A673 (cell line): ENCODE measurements at regions of chr12 and their contacts with region 1.

Region 1: GRCh38 chr12:42023733-42024494 is 120.8 kb downstream of the GXYLT1 start:
- DNase-seq: peak; percentile 91
- H3K4me3 ChIP-seq: peak overlapping the region; percentile 34
- H3K27ac ChIP-seq: peak overlapping the region; percentile 54
- H3K4me1 ChIP-seq: peaks cover 14% of the 10 kb centered on the region
- H3K27me3 ChIP-seq: no peaks in the 10 kb centered on the region
- CTCF ChIP-seq: peak; percentile 97

Region 2: DNA sequence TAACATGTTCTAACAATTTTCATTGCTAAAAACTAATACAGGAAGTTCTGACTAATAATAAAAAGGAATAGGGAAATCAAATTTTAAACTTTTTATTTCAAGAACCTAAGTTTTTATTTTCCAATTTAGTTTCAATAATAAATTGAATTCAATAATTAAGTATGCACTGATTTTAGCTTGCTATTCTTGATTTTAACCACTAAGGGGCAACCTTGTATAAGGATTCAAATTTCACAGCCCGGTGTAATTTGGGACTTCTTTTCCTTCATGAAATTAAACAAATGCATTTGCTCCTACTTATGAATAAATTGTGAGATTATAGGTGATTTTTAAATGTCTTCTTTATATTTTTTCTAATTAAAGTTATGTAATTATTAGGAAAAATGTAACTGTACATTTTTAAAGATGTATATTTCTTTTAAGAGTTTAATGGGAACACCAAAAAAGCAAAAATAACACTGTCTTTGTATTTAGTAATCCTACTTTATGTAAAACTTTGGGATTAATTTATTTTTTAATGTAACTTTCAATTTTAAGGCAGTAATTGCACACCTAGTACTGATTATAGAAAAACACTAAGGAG is 1077.2 kb before region 1 on chr12:
- CTCF ChIA-PET with region 1: no interaction called
- POLR2A ChIA-PET with region 1: no interaction called
- intact Hi-C with region 1: loop called (anchors 10 kb)
- DNase-seq: peak; percentile 61
- H3K4me3 ChIP-seq: no peak overlapping the region
- H3K27ac ChIP-seq: no peak overlapping the region
- H3K4me1 ChIP-seq: no peaks in the 10 kb centered on the region
- H3K27me3 ChIP-seq: no peaks in the 10 kb centered on the region
- CTCF ChIP-seq: peak; percentile 75

Region 3: GRCh38 chr12:41684997-41685396 is 338.9 kb before region 1 on chr12:
- CTCF ChIA-PET with region 1: no interaction called
- POLR2A ChIA-PET with region 1: no interaction called
- intact Hi-C with region 1: loop called (anchors 1 kb)
- DNase-seq: peak; percentile 72
- H3K4me3 ChIP-seq: no peak overlapping the region
- H3K27ac ChIP-seq: no peak overlapping the region
- H3K4me1 ChIP-seq: no peaks in the 10 kb centered on the region
- H3K27me3 ChIP-seq: no peaks in the 10 kb centered on the region
- CTCF ChIP-seq: peak; percentile 70

Region 4: DNA sequence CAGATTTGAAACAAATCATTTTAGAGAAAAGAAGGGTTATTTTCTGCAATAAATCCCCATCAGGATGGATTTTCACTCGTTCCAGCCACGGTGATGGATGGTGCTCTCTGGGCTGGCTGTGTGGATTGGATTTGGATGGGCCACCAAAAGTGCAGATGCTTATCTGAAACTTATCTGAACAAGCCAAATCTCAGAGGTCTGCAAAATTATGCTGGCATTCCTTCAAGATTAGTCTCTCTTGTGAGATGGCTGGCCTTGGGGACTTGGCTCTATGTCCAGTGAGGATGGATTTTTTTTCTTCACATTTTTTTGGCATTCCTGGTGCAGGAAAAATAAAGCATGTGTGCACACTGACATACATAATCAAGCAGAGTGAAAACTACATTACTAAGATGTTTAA is 221.1 kb before region 1 on chr12:
- CTCF ChIA-PET with region 1: no interaction called
- POLR2A ChIA-PET with region 1: no interaction called
- intact Hi-C with region 1: loop called (anchors 5 kb)
- DNase-seq: peak; percentile 23
- H3K4me3 ChIP-seq: no peak overlapping the region
- H3K27ac ChIP-seq: peak overlapping the region; percentile 72
- H3K4me1 ChIP-seq: peaks cover 18% of the 10 kb centered on the region
- H3K27me3 ChIP-seq: no peaks in the 10 kb centered on the region
- CTCF ChIP-seq: no peak

Region 5: GRCh38 chr12:41932470-41932991 is 91.4 kb before region 1 on chr12:
- CTCF ChIA-PET with region 1: no interaction called
- POLR2A ChIA-PET with region 1: no interaction called
- intact Hi-C with region 1: loop called (anchors 5 kb)
- DNase-seq: peak; percentile 96
- H3K4me3 ChIP-seq: peak overlapping the region; percentile 35
- H3K27ac ChIP-seq: peak overlapping the region; percentile 74
- H3K4me1 ChIP-seq: peaks cover 42% of the 10 kb centered on the region
- H3K27me3 ChIP-seq: no peaks in the 10 kb centered on the region
- CTCF ChIP-seq: 0 out of 2 replicates have a peak, but pooled peaks have one; percentile 12

Region 6: DNA sequence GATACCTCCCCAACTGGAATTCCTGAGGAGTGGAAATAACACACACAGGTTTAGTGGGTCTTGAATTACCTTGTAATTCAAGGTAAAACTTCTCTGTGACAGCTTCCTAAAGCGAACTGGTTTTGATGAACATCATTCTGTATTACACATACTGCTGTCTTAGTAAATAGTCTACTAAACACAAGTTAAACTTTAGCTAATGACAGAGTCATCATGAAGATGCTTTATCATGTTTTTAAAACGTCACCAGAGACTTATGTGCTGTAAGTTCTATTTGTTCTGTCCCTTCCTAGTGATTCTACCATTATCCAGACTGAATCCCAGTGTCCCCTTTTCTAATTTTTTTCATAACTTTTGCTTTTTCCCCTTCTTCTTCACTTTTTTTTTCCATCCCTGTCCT is 132.3 kb after region 1 on chr12:
- CTCF ChIA-PET with region 1: no interaction called
- POLR2A ChIA-PET with region 1: no interaction called
- intact Hi-C with region 1: no loop called
- DNase-seq: no peak
- H3K4me3 ChIP-seq: no peak overlapping the region
- H3K27ac ChIP-seq: no peak overlapping the region
- H3K4me1 ChIP-seq: no peaks in the 10 kb centered on the region
- H3K27me3 ChIP-seq: no peaks in the 10 kb centered on the region
- CTCF ChIP-seq: no peak

Region 7: GRCh38 chr12:42332301-42333285 is 308.7 kb after region 1 on chr12:
- CTCF ChIA-PET with region 1: no interaction called
- POLR2A ChIA-PET with region 1: no interaction called
- intact Hi-C with region 1: loop called (anchors 1 kb)
- DNase-seq: peak; percentile 70
- H3K4me3 ChIP-seq: no peak overlapping the region
- H3K27ac ChIP-seq: no peak overlapping the region
- H3K4me1 ChIP-seq: peaks cover 6% of the 10 kb centered on the region
- H3K27me3 ChIP-seq: no peaks in the 10 kb centered on the region
- CTCF ChIP-seq: peak; percentile 70

Region 8: DNA sequence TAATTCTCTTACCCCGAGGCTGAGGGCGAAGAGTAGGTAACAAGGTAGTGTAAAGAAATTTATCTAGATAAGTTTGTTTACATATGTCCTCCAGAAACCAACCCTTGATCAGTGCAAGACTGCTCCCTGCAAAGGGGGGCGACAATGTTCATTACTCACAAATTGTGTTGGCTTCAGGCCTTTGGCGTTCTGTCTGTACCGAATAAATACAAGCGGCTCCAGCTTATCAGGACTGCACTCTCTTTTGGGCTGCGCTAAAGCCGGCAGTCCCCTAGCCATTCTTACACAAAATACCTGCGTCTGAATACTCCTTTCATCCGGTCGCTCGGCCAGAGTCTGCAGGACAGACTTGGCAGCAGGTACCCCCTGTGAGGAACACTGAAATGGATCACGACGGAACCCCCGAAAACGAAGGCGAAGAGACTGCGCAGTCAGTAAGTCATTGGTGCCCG is 418.4 kb after region 1 on chr12:
- CTCF ChIA-PET with region 1: no interaction called
- POLR2A ChIA-PET with region 1: no interaction called
- intact Hi-C with region 1: no loop called
- DNase-seq: no peak
- H3K4me3 ChIP-seq: no peak overlapping the region
- H3K27ac ChIP-seq: no peak overlapping the region
- H3K4me1 ChIP-seq: no peaks in the 10 kb centered on the region
- H3K27me3 ChIP-seq: no peaks in the 10 kb centered on the region
- CTCF ChIP-seq: no peak